PC-3 (cell line): ENCODE measurements at regions of chr12 and their contacts with region 1.

Region 1: GRCh38 chr12:84772281-84772680 is 140.3 kb downstream of the SLC6A15 start:
- DNase-seq: peak; percentile 71
- ATAC-seq: peak; percentile 96
- H3K4me3 ChIP-seq: no peak overlapping the region
- H3K27ac ChIP-seq: no peak overlapping the region
- H3K4me1 ChIP-seq: peaks cover 12% of the 10 kb centered on the region
- H3K27me3 ChIP-seq: no peaks in the 10 kb centered on the region
- CTCF ChIP-seq: no peak

Region 2: DNA sequence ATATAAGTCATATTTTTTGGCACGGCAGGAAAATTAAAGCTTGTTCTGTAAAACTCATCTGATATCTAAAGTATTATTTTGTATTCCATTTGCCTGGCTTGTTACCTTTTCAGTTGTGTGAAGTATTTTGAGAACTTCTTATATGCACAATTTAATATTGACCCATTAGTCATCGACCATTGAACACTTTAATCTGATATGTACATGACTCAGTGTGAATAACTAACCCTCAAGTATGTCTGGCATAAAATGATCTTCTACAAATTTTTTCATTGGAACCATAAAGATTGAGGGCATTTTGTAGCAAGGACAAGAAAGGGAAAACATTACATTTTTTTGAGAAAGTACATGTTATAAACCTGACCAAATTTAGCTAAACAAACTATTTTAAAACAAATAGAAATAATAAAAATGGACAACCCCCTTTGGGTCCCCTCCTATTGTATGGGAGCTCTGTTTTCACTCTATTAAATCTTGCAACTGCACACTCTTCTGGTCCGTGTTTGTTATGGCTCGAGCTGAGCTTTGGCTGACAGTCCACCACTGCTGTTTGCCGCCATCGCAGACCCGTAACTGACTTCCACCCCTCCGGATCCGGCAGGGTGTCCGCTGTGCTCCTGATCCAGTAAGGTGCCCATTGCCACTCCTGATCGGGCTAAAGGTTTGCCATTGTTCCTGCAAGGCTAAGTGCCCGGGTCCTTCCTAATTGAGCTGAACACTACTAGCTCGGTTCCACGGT is 21.4 kb after region 1 on chr12:
- CTCF ChIA-PET with region 1: no interaction called
- POLR2A ChIA-PET with region 1: no interaction called
- intact Hi-C with region 1: loop called (anchors 1 kb)
- DNase-seq: peak; percentile 88
- ATAC-seq: peak; percentile 92
- H3K4me3 ChIP-seq: no peak overlapping the region
- H3K27ac ChIP-seq: peak overlapping the region; percentile 63
- H3K4me1 ChIP-seq: peaks cover 22% of the 10 kb centered on the region
- H3K27me3 ChIP-seq: no peaks in the 10 kb centered on the region
- CTCF ChIP-seq: no peak